ENCODE measurements at regions of chr4 and their contacts with region 1.

Region 1: DNA sequence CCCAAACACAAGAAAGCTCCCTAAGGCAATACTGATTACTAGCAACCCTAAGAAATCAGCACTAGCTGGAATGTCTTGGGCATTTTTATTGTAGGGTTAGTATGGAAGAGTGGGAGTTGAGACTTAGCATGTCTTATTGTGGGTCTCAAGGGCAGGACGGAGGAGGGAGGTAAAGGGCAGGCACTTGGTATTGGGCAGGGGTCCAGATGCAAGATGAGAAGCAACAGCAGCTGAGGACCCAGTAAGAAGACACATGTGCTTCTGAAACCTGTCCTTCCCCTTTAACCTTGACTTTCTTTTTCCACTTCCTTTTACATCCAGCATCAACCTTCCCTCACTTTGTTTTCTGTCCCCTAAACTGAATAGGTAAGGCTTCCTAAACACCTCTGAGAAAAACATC is 37.4 kb downstream of the LARP7 start:
- DNase-seq: no peak
- ATAC-seq: no peak

Region 2: GRCh38 chr4:112589206-112589605 is 85.2 kb before region 1 on chr4:
- intact Hi-C with region 1: no loop called
- DNase-seq: no peak
- ATAC-seq: no peak

Region 3: GRCh38 chr4:112704991-112705845 is 30.8 kb after region 1 on chr4:
- intact Hi-C with region 1: loop called (anchors 2 kb)
- DNase-seq: peak; percentile 71
- ATAC-seq: peak; percentile 79

Region 4: DNA sequence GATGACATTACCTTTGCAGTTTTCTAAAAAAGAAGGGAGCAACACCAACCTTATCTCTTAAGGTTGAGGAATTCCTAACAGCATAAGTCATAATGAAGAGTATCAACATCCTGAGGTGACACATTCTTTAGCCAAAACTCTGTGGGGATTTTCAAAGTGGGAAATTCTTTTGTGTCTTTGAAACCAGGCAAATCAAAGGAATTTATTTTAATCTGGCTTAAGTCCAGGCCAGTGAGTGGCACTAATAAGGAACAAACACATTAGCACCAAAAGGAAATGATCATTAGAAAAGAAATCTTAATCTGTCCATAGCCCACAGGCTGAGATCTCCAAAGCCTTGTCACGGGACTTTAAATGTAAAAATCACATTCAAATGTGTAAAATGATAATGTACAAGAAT is 72.7 kb after region 1 on chr4:
- intact Hi-C with region 1: loop called (anchors 5 kb)
- DNase-seq: no peak
- ATAC-seq: no peak

Region 5: GRCh38 chr4:113026556-113026955 is 352.2 kb after region 1 on chr4:
- intact Hi-C with region 1: no loop called
- DNase-seq: no peak
- ATAC-seq: no peak